ENCODE measurements at regions of chr10 and their contacts with region 1.

Region 1: DNA sequence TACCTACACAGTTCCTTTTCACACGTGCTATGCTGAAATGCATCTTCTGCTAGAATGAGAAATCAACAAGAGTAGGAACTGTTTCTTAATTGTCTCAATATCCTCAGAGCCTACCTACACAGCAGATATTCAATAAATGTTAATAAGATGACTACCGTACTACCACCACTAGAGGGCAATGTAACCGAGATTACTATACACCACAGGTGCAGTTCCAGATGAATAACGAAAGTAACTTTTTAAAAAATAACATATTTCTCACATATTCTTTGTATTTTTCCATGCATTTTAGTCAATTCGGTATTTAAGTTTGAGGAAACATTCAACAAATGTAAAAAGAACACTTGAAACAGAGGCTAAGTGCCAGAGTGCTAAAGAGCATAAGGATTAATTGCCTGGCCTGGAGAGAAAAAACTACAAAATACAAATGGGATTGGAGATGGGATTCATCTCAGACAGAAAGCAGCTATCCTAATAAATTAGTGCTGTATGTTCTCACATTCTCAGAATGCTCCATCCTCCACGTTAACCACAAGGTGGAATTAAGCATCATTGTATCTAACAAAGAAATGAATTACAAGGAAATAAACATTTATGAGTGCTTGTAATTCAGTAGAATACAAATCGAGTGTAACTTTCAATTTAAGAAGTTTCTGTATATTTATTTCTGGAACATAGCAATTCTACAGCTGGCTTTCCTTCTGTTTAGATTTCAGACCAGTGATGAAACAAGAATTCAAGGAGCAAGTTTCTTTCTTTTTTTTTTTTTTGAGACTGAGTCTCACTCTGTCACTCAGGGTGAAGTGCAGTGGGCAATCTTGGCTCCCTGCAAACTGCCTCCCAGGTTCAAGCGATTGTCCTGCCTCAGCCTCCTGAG is 20.3 kb upstream of the HECTD2 start:
- DNase-seq: peak; percentile 78
- ATAC-seq: peak; percentile 85
- H3K4me3 ChIP-seq: no peak overlapping the region
- H3K4me3 Mint-ChIP-seq: no peak overlapping the region
- H3K27ac ChIP-seq: no peak overlapping the region
- H3K27ac Mint-ChIP-seq: no peak overlapping the region
- H3K4me1 ChIP-seq: no peaks in the 10 kb centered on the region
- H3K4me1 Mint-ChIP-seq: peaks cover 3% of the 10 kb centered on the region
- H3K27me3 ChIP-seq: peaks cover 0 to 3% (median 0%) of the 10 kb centered on the region in 4 experiments
- H3K27me3 Mint-ChIP-seq: peaks cover 33% of the 10 kb centered on the region
- CTCF ChIP-seq: peak; percentile 84

Region 2: DNA sequence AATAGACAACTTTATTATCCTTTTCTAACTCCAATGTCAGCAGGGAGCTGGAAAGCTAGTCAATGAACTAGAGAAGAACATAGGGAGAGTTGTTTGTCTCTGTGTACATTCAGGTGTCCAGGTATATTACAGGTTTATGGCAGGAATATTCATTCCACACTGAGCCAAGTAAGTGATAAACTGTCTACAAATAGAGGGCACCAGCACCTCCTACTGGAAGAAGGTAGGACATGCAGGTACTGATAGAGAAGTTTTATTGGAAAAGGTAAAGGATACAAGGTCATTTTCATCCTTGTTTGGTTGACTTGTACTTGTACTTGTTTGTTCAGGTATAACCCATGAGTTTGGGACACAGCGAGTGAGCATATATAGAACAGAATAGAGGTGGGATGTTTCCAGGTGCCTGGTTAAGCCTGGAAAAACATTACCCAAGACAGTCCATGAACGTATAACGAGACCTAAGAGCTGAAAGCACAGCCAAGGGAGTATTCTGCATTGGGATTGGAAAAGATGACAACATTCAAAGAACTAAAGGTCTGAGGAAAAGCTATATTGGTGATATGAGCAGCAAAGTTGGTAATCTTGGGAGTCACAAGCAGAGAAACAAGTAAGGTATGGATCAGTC is 304.4 kb after region 1 on chr10:
- CTCF ChIA-PET with region 1: interaction called, 3 read pairs
- POLR2A ChIA-PET with region 1: no interaction called
- intact Hi-C with region 1: loop called (anchors 5 kb)
- DNase-seq: peak; percentile 17
- ATAC-seq: no peak
- H3K4me3 ChIP-seq: no peak overlapping the region
- H3K4me3 Mint-ChIP-seq: no peak overlapping the region
- H3K27ac ChIP-seq: no peak overlapping the region
- H3K27ac Mint-ChIP-seq: no peak overlapping the region
- H3K4me1 ChIP-seq: no peaks in the 10 kb centered on the region
- H3K4me1 Mint-ChIP-seq: no peaks in the 10 kb centered on the region
- H3K27me3 ChIP-seq: no peaks in the 10 kb centered on the region
- H3K27me3 Mint-ChIP-seq: peaks cover 17% of the 10 kb centered on the region
- CTCF ChIP-seq: peak; percentile 73

Measured in B cell (primary cell).